RWPE1 (cell line): ENCODE measurements at regions of chr20 and their contacts with region 1.

Region 1: DNA sequence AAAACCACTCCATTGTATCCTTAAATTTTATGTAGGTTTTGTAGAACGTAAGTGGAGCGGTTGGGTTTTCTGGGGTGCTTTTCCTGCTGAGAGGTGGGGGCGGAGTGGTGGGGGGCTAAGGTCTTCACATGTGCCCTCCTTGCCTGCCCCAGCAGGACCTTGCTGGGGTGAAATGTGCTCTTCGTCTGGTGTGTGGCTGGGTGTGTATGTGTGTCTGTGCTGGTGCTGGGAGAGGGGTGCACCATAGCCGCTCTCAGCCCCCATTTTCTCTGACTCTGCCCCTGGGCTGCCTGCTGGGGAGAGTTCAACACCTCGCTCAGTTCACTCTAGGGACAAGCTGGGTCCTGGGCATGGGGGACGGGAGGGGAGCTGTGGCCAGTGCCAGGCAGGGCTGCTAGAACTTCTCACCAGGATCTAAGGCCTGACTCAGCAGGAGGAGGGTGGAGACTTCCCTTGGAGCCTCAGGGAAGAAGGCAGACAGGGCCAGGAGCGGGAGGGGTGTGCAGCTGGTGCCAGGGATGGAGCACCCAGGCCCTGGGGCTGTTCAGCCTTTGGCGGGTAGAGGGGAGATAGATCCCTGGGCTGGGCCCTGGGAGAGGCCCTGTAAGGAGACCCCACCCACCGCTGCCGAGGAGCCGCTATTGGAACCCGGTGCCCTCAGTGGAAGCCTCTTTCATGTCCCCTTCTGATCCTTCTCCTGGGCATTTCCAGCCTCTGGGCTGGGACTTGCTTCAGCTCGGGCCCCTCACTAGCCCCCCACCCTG is 4.8 kb downstream of the SOX18 start:
- DNase-seq: peak; percentile 86
- H3K27ac ChIP-seq: peak overlapping the region; percentile 78
- CTCF ChIP-seq: no peak

Region 2: GRCh38 chr20:64062596-64063388 is 18.1 kb after region 1 on chr20 and contains the start of gene TCEA2:
- CTCF ChIA-PET with region 1: interaction called, 98 read pairs
- POLR2A ChIA-PET with region 1: interaction called, 5 read pairs
- DNase-seq: peak; percentile 99
- H3K27ac ChIP-seq: peak within 1 kb of the TSS; percentile 83
- CTCF ChIP-seq: no peak

Region 3: DNA sequence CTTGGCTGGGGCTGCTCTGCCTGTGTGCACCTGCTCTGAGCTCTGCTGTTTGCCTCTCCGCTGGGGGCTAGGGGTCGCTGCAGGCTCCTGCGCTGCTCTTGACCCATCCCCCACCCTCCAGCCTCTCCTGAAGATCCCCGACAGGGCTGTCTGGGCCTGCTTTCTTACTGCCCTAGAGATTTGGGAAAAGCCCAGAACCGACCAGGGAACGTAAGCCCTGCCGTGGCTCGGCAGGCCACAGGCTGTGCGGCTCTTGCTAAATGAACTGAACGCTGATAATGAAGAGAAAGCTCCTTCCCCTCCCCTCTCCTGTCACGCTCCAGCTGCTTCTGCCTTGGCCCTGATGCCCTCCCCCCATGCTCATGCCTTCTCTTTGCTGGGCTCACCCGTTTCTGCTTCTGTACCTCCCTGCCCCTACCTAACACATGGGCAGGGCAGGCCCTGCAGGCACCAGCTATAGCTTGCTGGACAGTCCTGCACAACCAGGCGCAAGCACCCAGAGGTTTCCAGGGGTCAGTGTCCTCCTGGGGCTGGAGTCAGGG is 178.9 kb after region 1 on chr20:
- CTCF ChIA-PET with region 1: no interaction called
- POLR2A ChIA-PET with region 1: no interaction called
- DNase-seq: no peak
- H3K27ac ChIP-seq: no peak overlapping the region
- CTCF ChIP-seq: no peak